PC-9 (cell line): ENCODE measurements at regions of chr2 and their contacts with region 1.

Region 1: DNA sequence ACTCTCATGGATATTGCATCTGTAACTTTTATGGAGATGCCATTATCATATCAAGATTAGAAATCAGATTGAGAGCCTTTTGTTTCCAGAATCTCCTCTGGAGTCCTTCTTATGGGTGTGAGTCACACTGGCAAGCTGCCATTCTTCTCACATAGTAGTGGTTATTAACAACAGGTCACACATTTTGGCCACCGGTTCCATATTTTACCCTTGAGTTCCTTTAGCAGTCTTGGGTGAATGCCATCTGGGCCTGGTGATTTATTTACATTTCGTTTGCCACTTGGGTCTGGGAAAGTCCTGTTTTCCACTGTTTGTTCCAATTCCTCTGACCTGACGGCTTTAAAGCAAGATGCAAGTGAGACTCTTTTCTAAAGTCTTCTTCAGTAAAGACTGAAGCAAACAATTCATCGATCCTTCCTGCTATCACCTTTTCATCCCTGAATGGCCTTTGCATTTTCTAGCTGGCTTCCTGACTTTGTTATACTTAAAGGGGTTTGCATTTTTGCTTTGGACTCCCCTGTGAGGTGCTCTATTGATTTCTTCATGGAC is 80.5 kb upstream of the CAVIN2 start:
- DNase-seq: peak; percentile 72 to 82
- H3K4me3 ChIP-seq: no peak overlapping the region
- H3K27ac ChIP-seq: peak overlapping the region; percentile 14; the same call in 1 of the 2 replicates
- H3K4me1 ChIP-seq: peaks cover 16% of the 10 kb centered on the region
- H3K27me3 ChIP-seq: no peaks in the 10 kb centered on the region
- CTCF ChIP-seq: no peak

Region 2: GRCh38 chr2:191869178-191869577 is 58.2 kb before region 1 on chr2:
- CTCF ChIA-PET with region 1: no interaction called
- POLR2A ChIA-PET with region 1: no interaction called
- intact Hi-C with region 1: loop called (anchors 5 kb)
- DNase-seq: no peak
- H3K4me3 ChIP-seq: no peak overlapping the region
- H3K27ac ChIP-seq: no peak overlapping the region
- H3K4me1 ChIP-seq: peaks cover 24% of the 10 kb centered on the region
- H3K27me3 ChIP-seq: no peaks in the 10 kb centered on the region
- CTCF ChIP-seq: no peak

Region 3: DNA sequence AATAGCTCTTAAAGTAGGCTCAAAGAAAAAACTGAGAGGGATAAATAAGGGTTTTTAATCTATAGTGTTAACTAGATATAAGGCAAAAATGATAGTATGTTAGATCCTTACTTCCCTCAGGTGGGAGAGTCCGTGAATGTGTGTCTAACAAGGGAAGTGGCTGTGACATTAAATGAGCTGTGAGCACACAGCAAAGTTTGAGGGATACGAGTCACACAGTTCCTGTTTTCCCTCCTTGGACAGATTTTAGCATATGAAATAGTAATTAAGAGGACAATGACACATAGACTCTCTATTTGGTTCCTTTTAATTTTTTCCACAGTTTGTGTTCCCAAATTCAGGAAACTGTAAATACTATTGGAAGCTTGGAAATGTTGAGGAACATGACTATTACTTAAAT is 67.9 kb after region 1 on chr2:
- CTCF ChIA-PET with region 1: no interaction called
- POLR2A ChIA-PET with region 1: no interaction called
- intact Hi-C with region 1: no loop called
- DNase-seq: no peak
- H3K4me3 ChIP-seq: no peak overlapping the region
- H3K27ac ChIP-seq: no peak overlapping the region
- H3K4me1 ChIP-seq: no peaks in the 10 kb centered on the region
- H3K27me3 ChIP-seq: no peaks in the 10 kb centered on the region
- CTCF ChIP-seq: no peak